Heart right ventricle (tissue), 16 donors: ENCODE measurements at regions of chr5 and their contacts with region 1.

Region 1: GRCh38 chr5:148353634-148354033 is 18.3 kb downstream of the SPINK9 start:
- DNase-seq: no peak
- ATAC-seq: no peak
- H3K4me3 ChIP-seq: no peak overlapping the region
- H3K27ac ChIP-seq: no peak overlapping the region
- H3K4me1 ChIP-seq: no peaks in the 10 kb centered on the region
- H3K27me3 ChIP-seq: no peaks in the 10 kb centered on the region
- CTCF ChIP-seq: no peak

Region 2: DNA sequence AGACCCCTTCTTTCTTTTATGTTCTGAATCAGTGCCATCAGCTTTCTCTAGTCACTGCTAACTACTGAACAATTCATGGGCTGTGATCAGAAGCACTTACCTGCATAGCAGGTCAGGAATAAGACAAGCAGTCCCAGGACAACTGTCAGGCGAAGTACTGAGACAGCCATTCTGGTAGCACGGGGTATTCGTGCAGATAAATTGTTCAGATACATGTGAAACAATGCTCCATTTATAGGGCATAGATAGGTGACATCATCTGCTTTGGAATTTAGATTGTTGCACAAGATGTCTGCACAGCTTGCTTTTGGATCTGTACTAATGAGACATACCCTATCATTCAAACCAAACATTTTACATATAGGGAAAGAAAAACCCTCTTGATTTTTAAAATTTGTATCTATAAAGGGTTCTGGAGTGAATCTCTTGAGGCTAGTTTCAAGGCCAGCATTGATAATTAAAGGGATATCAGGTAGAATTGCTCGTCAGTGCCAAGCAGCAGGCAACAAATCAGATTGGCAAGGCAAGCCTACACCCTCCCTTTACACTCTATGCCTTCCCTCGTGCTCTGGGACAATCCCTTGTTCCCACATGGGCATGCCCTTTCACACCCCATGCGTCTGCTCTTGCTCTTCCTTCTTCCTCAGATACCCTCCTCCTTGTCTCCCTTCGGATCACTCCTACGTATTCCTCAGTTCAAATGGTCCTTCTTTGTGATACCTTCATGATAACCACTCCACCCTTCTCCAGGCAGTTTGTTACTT is 447.1 kb before region 1 on chr5 and contains the start of gene C5orf46:
- intact Hi-C with region 1: no loop called
- DNase-seq: no peak
- ATAC-seq: peak in 6 of 8 donors; percentile 39 to 80 (median 60)
- H3K4me3 ChIP-seq: peak within 1 kb of the TSS in 4 of 10 donors; percentile 14 to 27 (median 22)
- H3K27ac ChIP-seq: peak within 1 kb of the TSS in 5 of 10 donors; percentile 37 to 59 (median 51)
- H3K4me1 ChIP-seq: peaks cover 0 to 23% (median 2%) of the 10 kb centered on the region in 9 donors
- H3K27me3 ChIP-seq: no peaks in the 10 kb centered on the region
- CTCF ChIP-seq: no peak
- total RNA-seq, gene C5orf46: 2.3 to 10.9 (median 4.7) TPM in 9 of 10 donors, not detected in the other

Region 3: DNA sequence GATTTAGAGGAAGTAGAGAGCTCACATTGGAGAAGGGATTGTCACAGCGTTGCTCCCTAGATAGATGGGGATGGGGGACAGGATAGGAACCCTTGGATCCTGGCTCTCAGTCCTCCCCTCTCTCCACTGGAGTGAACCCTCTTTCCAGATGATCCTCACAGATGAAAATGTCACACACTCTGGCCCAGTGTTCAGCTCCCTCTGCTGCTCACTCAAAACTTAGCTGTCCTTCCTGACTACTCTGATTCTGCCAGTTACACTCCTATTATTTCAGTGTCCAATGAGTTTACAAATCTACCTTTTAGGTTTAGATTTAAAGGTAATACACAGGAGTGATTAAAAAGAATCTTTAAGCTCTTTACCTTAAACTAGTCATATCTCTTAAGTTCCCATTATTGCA is 47.2 kb before region 1 on chr5:
- intact Hi-C with region 1: loop called in 1 of 10 experiments (anchors 10 kb)
- DNase-seq: no peak
- ATAC-seq: no peak
- H3K4me3 ChIP-seq: no peak overlapping the region
- H3K27ac ChIP-seq: no peak overlapping the region
- H3K4me1 ChIP-seq: no peaks in the 10 kb centered on the region
- H3K27me3 ChIP-seq: no peaks in the 10 kb centered on the region
- CTCF ChIP-seq: no peak

Region 4: DNA sequence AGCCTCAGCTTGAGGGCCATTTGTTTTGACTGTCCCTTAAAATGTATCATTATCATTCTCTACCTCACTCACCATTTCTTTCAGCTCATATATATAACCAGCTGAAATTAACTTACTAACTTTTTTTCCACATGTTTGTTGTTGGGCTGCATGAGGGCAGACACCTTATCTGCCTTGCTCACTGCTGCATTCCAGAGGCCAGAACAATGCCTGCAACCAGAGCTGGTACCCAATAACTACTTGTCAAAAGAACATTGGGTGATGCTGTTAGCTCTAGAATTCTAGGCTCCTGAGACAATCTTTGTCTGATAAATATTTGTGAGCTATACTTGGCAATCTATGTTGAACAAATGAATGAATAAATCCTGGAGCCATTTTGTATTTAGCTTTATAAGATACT is 232.4 kb after region 1 on chr5:
- intact Hi-C with region 1: no loop called
- DNase-seq: no peak
- ATAC-seq: no peak
- H3K4me3 ChIP-seq: no peak overlapping the region
- H3K27ac ChIP-seq: no peak overlapping the region
- H3K4me1 ChIP-seq: no peaks in the 10 kb centered on the region
- H3K27me3 ChIP-seq: no peaks in the 10 kb centered on the region
- CTCF ChIP-seq: peak in 2 of 9 donors; percentile 5 to 18